ENCODE measurements at regions of chr20 and their contacts with region 1.

Region 1: DNA sequence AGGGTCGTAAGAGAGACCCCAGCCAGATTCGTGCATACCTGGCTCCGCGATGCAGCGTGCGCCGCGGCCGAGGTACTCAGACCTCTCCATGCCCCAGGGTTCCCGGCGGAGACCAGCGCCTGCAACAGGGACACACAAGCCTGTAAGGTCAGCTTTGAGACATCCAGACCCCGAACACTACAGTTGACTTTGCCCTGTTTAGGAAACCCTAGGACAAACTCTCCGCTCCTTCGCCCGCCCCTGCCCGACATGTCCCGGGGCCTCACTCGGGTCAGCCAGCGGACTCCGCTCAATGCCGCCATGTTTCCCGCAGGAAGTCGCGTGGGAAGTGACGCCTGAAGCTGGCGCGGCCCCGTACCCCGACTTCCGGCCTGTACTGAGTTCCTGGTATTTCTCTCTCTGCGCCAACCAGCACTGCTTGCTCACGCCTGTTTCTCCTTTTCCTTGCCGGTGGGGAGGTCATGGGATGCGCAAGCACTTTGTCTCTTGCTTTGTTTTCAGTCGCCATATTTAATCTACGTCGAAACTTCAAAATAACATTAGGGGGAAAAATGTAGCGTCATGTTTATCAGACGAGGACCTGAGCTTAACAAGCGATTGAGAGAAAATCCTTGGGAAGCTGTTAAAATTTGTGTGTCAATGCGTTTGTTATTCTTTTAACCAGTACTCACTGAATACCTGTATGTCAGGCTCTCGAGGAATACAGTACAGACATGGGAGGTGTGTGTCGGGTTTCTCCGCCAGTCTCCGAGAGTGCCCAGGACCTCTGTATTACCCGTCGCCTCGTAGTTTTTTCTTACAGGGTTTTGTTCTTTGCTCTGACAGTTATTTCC is at the start of gene IDH3B:
- DNase-seq: peak; percentile 93
- ATAC-seq: peak; percentile 98 to 99
- total RNA-seq, gene IDH3B: 149 to 166 TPM

Region 2: DNA sequence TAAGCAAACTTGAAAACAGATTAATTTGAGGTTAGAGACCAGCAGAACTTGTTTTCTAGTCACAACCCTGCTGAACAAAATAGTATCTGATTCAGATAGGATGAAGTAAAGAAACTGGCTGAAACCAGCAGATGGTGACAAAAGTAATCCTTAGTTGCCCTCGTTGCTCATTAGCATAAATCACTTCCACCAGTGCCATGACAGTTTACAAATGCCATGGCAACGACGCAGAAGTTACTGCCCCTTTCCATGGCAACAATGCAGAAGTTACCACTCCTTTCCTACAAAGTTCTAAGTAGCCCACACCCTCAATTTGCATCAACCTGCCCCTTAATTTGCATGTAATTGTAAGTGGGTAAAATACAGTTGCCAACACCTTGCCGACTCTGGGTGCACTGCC is 217.3 kb before region 1 on chr20:
- intact Hi-C with region 1: no loop called
- DNase-seq: no peak
- ATAC-seq: no peak

Region 3: GRCh38 chr20:2838170-2838797 is 174.2 kb after region 1 on chr20:
- intact Hi-C with region 1: loop called in 1 of 2 experiments (anchors 10 kb)
- DNase-seq: no peak
- ATAC-seq: no peak

Measured in left cardiac atrium (tissue), 4 donors.